ENCODE measurements at regions of chr13 and their contacts with region 1.

Region 1: GRCh38 chr13:74287724-74288169 is 153.5 kb upstream of the KLF12 start:
- DNase-seq: peak; percentile 32
- ATAC-seq: peak; percentile 52
- H3K4me3 Mint-ChIP-seq: peak overlapping the region; percentile 77
- H3K27ac Mint-ChIP-seq: peak overlapping the region; percentile 94
- H3K4me1 Mint-ChIP-seq: peaks cover 51% of the 10 kb centered on the region
- H3K27me3 Mint-ChIP-seq: no peaks in the 10 kb centered on the region
- CTCF ChIP-seq: no peak

Region 2: DNA sequence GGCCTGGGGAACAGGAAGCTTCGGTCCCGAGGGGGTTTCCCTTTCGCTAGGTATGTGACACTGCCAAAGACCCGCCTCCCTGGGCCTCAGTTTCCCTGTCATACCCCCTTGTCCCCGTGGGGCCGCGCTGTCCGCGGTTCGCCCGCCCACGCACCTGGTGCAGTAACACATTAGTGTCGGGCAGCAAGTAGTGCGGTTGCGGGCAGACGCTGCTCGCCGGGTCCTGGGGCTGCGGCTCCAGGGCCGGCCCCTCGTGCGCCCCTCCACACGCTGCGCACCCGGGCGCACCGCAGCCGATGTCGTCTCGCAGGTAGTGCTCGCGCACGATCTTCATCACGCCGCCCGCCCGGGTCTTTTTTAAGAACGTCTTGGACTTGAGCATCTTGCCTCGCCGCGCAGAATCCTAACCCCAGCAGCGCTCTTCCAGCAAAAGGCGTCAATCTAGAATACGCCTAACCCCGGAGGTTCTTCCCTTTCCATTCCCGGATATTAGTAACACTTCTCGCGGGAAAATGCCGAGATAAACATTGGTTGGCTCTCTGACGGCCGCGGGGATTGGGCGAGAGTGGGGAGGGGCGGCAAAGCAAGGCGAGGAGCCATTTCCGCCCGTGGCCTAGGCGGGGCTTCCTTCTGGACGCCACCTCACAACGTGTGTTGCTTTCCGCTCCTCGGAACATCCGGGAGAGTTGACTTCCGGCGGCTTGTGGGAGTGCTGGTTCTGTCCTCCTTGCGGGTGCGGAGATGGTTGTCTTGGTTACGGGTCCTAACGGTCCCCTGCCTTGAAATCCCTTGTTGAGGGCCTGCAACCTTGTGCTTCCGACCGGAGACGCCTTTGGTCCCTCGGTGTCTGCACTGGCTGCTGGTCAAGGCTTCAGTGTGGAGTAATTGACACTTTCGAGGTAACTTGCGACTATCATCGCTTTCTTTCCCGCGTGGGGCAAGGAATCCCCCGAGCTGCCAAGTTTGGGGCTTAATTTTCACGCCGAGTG is 1506.0 kb before region 1 on chr13 and contains the starts of genes DIS3 and PIBF1:
- CTCF ChIA-PET with region 1: no interaction called
- POLR2A ChIA-PET with region 1: no interaction called
- intact Hi-C with region 1: loop called (anchors 5 kb)
- DNase-seq: peak; percentile 87
- ATAC-seq: peak; percentile 98
- H3K4me3 Mint-ChIP-seq: peak within 1 kb of the TSS; percentile 99
- H3K27ac Mint-ChIP-seq: peak within 1 kb of the TSS; percentile 98
- H3K4me1 Mint-ChIP-seq: peaks cover 50% of the 10 kb centered on the region
- H3K27me3 Mint-ChIP-seq: no peaks in the 10 kb centered on the region
- CTCF ChIP-seq: no peak
- total RNA-seq, gene DIS3: 43.2 and 45.2 TPM in 2 replicates
- total RNA-seq, gene PIBF1: 25.8 and 32.7 TPM in 2 replicates

Region 3: GRCh38 chr13:73754727-73755292 is 532.9 kb before region 1 on chr13:
- CTCF ChIA-PET with region 1: interaction called, 14 read pairs
- POLR2A ChIA-PET with region 1: no interaction called
- intact Hi-C with region 1: loop called (anchors 1 kb)
- DNase-seq: no peak
- ATAC-seq: no peak
- H3K4me3 Mint-ChIP-seq: no peak overlapping the region
- H3K27ac Mint-ChIP-seq: no peak overlapping the region
- H3K4me1 Mint-ChIP-seq: peaks cover 4% of the 10 kb centered on the region
- H3K27me3 Mint-ChIP-seq: no peaks in the 10 kb centered on the region
- CTCF ChIP-seq: peak; percentile 94

Region 4: GRCh38 chr13:73849292-73849691 is 438.5 kb before region 1 on chr13:
- CTCF ChIA-PET with region 1: interaction called, 54 read pairs
- POLR2A ChIA-PET with region 1: interaction called, 4 read pairs
- intact Hi-C with region 1: loop called (anchors 1 kb)
- DNase-seq: no peak
- ATAC-seq: peak; percentile 45
- H3K4me3 Mint-ChIP-seq: no peak overlapping the region
- H3K27ac Mint-ChIP-seq: no peak overlapping the region
- H3K4me1 Mint-ChIP-seq: peaks cover 30% of the 10 kb centered on the region
- H3K27me3 Mint-ChIP-seq: no peaks in the 10 kb centered on the region
- CTCF ChIP-seq: no peak

Region 5: GRCh38 chr13:73967397-73968165 is 320.2 kb before region 1 on chr13:
- CTCF ChIA-PET with region 1: no interaction called
- POLR2A ChIA-PET with region 1: no interaction called
- intact Hi-C with region 1: loop called (anchors 1 kb)
- DNase-seq: no peak
- ATAC-seq: peak; percentile 93
- H3K4me3 Mint-ChIP-seq: peak overlapping the region; percentile 57
- H3K27ac Mint-ChIP-seq: peak overlapping the region; percentile 82
- H3K4me1 Mint-ChIP-seq: peaks cover 61% of the 10 kb centered on the region
- H3K27me3 Mint-ChIP-seq: no peaks in the 10 kb centered on the region
- CTCF ChIP-seq: no peak

Region 6: DNA sequence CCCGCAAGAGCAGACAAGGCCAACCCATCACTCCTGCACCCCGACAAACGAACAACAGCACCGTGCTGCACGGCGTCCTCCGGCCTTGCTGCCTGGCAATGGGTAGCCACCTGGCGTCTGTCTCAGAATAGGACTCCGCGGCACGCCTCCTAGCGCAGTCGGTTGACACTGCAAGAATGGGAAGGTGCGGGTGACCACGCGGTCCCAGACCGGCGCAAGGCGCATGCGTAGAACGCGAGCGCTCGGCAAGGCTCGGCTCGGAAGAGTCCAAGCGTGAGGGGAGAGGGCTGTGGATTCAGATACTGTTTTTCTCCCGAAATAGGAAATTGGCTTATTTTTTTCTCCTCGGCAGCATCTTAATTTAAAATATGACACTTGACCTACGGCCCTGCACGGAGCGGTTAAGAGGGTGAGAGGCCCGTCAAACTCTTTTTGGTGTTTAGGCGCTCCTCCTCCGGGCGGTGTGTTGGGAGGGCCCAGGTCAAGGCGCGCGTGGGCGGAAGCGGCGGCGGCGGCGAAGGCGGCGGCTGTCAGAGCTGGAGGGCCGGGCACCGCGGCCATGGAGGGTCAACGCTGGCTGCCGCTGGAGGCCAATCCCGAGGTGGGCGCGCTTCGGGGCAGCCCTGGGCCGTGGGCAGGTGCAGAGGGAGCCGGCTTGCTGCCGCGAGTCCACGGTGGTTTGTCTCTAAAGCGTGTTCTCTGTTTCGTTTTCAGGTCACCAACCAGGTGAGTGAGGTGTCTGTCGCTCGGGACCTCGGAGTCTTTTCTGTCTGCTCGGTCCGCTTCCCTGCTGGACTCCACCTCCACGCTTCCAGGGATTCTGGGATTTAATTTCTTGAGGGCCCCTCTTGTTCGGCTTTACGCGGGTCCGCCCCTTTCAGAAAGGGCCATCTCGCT is 1261.8 kb after region 1 on chr13 and contains the start of gene UCHL3:
- CTCF ChIA-PET with region 1: no interaction called
- POLR2A ChIA-PET with region 1: no interaction called
- intact Hi-C with region 1: loop called (anchors 5 kb)
- DNase-seq: peak; percentile 96
- ATAC-seq: peak; percentile 94
- H3K4me3 Mint-ChIP-seq: peak within 1 kb of the TSS; percentile 98
- H3K27ac Mint-ChIP-seq: peak within 1 kb of the TSS; percentile 99
- H3K4me1 Mint-ChIP-seq: peaks cover 39% of the 10 kb centered on the region
- H3K27me3 Mint-ChIP-seq: no peaks in the 10 kb centered on the region
- CTCF ChIP-seq: no peak
- total RNA-seq, gene UCHL3: 21.9 and 22.7 TPM in 2 replicates

Region 7: DNA sequence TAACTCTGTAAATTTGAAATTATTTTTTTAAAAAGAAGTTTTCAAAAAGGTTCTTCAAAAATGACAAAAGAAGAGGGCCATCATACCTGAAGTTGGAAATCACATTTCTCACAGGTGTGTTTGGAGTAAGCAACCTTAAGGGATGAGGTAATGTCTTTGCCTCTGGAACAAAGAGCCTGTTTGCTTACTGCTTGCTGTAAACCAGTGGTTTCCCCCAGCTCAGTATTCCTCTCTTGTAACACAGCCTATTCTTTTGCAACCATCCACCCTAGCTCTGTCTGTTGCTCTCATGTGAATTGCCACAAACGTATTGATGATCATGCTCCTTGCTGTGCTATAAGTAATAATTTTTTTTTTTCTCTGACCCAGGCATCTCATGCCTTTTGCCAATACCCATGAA is 1299.9 kb after region 1 on chr13:
- CTCF ChIA-PET with region 1: no interaction called
- POLR2A ChIA-PET with region 1: no interaction called
- intact Hi-C with region 1: no loop called
- DNase-seq: no peak
- ATAC-seq: no peak
- H3K4me3 Mint-ChIP-seq: no peak overlapping the region
- H3K27ac Mint-ChIP-seq: peak overlapping the region; percentile 6
- H3K4me1 Mint-ChIP-seq: no peaks in the 10 kb centered on the region
- H3K27me3 Mint-ChIP-seq: no peaks in the 10 kb centered on the region
- CTCF ChIP-seq: no peak